Cardiac septum (tissue), 1 donor: ENCODE measurements at regions of chr5 and their contacts with region 1.

Region 1: DNA sequence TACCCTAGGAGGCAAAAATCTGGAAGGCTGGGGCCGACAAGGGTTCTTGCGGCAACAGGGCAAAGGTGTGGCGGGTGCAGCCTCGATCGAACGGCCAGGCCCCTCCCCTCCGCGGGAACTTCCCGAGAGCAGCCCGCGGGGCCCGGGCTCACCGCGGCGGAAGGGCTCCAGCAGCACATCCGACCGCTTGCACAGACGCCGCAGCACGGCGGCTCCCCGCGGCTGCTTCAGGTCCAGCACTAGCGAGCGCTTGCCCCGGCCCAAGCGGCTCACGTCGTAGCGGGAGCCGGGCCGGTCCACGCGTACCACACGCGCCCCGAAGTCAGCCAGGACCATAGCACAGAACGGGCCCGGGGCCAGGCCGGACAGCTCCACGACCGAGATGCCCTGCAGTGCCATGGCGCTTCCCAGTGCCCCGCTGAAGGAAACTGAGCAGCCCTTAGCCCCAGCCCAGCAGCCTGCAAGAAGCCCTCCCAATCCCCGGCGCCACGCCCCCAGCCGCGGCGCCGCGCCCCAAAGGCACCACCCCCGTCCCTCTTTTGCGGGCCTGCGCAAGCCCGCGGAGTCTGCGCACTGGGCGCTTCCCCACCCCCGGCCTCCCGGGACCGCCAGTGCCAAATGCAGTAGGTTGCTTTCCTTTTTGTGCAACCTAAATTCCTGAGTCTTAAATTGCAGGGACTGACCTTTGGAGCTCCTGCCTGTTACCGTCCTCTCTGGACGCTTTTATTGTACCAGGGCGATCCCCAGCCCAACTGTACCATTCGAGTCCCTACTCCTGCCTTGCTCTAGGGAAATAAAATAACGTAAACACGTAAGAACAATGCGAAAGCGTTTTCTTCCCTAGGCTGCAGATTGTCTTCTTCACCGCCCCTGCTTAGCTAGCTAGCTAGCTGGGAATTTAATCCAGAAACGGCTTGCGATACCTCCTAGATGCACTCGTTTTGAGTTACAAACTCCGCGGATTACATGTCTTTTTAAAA is at the start of gene AMACR:
- DNase-seq: peak; percentile 96
- total RNA-seq, gene AMACR: 7.9 TPM

Region 2: DNA sequence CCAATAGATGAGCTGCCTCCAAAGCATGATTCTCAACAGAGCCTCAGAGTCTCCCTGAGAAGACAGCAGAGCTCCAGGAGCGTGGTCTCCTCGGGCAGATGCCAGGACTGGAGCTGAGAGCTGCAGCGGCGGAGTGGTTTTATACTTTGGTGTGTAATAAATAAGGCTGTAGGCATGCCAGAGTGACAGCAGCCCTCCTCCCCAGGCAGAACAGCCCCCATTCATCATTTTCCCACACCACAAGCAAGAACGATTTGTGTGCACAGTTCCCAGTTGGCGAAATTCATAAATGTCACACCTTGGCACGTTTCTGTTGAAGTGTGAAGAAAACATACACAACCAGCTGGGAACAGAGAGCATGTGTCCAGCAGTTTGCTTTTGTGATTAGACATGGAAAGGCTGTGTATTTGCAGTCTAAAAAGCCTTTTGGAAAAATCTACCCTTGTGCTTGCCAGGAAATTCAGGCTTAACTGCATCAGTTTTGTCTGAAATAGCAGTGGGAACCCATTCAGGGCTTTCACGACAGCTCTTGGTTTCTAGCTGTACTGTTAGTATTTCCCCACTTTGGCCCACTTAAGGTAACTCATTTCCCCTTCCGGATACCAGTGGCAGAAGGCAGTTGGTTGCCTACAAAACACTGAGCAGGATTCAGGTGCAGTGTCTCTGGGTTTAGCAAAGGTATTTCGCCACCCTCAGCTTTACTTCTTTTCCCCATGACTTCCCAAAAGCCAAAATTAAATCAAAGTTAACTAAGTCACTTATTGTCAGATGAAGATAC is 35.4 kb after region 1 on chr5 and contains the start of gene C1QTNF3:
- intact Hi-C with region 1: loop called (anchors 5 kb)
- DNase-seq: no peak
- total RNA-seq, gene C1QTNF3: 2.8 TPM

Region 3: GRCh38 chr5:34929150-34929719 is 921.3 kb after region 1 on chr5 and contains the start of gene DNAJC21:
- intact Hi-C with region 1: loop called (anchors 10 kb)
- DNase-seq: peak; percentile 99
- total RNA-seq, gene DNAJC21: 68.4 TPM